ENCODE measurements at regions of chr11 and their contacts with region 1.

Region 1: DNA sequence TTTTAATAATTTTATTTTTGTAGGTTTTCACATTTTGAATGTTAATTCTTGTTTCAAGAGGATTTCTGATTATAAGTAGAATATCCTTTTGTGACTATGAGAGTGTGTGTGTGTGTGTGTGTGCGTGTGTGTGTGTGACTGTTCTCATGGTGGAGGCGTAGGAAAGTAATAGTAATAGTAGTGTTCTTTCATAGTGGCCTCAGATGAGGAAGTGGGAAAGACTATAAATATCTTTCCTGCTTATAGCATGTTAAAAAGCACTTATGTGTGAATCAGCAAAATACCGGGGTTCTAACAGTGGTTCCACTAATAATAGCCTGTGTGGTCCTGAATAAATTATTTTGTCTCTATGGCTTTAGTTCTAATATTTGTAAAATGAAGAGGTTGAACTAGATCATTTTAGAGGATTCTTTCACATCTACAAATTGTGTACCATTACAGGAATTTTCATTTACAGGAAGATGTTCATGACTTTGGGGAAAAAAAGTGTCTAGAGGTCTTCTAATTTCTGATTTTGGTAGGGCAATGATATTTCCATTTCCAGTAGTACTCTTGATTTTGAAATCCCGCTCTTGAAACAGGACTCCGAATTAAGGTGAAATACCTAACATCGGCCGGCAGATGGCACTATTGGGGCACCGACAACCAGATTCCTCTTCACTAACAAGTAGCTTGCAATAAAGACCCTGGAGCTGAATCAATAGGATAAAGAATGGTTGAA is 29.9 kb upstream of the OR10G7 start:
- DNase-seq: peak; percentile 72 to 82 (median 81)
- H3K4me3 ChIP-seq: peak overlapping the region in 1 of 3 experiments; percentile 62
- H3K4me3 Mint-ChIP-seq: peak overlapping the region; percentile 58 to 76
- H3K27ac ChIP-seq: peak overlapping the region in 1 of 2 donors; percentile 82
- H3K27ac Mint-ChIP-seq: peak overlapping the region; percentile 90 to 94 (median 92)
- H3K4me1 ChIP-seq: peaks cover 36 to 44% of the 10 kb centered on the region in 2 donors
- H3K4me1 Mint-ChIP-seq: peaks cover 43% of the 10 kb centered on the region
- H3K27me3 ChIP-seq: no peaks in the 10 kb centered on the region
- H3K27me3 Mint-ChIP-seq: peaks cover 0 to 2% (median 2%) of the 10 kb centered on the region in 3 donors
- CTCF ChIP-seq: peak; percentile 96

Region 2: DNA sequence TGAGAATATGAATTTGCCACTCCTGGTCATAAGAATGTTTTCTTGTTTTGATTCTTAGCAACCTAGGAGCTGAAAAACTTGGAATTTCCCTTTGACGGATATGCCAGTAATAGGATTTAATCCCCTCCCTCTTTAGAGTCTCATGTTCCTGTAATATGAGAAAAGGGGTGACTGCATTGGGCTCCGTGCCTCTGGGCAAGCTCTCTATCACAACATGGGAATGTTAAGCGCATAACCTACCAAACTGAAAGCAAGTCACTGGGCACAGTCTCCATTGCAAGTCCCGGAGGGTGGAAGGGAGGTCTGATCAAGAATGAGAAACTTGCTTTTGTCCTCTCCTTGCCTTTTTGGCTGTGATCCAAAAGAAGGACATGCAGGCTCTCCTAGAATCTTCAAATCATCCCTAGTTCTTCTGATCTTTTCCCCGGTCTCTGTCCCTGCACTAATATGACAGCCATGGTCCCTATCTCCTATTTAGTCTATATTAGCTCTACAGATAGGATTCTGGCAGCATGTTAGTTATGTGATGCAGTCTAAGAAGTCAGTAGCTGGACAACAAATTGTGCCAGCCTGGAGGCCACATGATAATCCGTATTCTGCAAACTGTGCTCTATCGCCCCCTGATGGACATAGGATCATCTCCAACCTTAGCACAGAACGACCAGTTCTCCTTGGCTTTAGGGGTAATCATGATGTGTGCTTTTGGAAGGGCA is 123.8 kb after region 1 on chr11:
- intact Hi-C with region 1: loop called (anchors 5 kb)
- DNase-seq: peak; percentile 63 to 76 (median 70)
- H3K4me3 ChIP-seq: no peak overlapping the region
- H3K4me3 Mint-ChIP-seq: no peak overlapping the region
- H3K27ac ChIP-seq: no peak overlapping the region
- H3K27ac Mint-ChIP-seq: peak overlapping the region in 1 of 7 donors; percentile 38
- H3K4me1 ChIP-seq: peaks cover 14 to 15% of the 10 kb centered on the region in 2 donors
- H3K4me1 Mint-ChIP-seq: peaks cover 18% of the 10 kb centered on the region
- H3K27me3 ChIP-seq: no peaks in the 10 kb centered on the region
- H3K27me3 Mint-ChIP-seq: peaks cover 0 to 3% (median 2%) of the 10 kb centered on the region in 3 donors
- CTCF ChIP-seq: peak; percentile 90

Region 3: DNA sequence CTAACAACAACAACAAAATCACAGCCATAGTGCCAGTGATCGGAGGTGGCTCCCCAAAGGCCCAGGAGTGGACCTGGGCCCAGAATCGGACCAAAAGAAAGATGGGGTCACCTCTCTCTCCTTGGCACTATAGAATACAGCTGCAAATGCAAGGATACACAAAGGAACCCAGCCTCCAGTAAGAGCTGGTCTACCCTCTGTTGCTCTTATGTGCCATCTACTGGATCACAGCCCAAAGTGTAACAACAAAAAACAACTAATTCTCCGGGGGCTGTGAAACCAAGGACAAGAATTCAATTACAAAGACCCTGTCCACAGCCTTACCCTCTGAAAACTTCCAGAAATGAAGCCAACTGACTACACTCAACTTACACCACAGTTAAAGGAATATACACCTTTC is 206.7 kb after region 1 on chr11:
- intact Hi-C with region 1: loop called in 1 of 2 experiments (anchors 10 kb)
- DNase-seq: no peak
- H3K4me3 ChIP-seq: no peak overlapping the region
- H3K4me3 Mint-ChIP-seq: no peak overlapping the region
- H3K27ac ChIP-seq: no peak overlapping the region
- H3K27ac Mint-ChIP-seq: peak overlapping the region in 1 of 7 donors; percentile 21
- H3K4me1 ChIP-seq: no peaks in the 10 kb centered on the region
- H3K4me1 Mint-ChIP-seq: peaks cover 7% of the 10 kb centered on the region
- H3K27me3 ChIP-seq: no peaks in the 10 kb centered on the region
- H3K27me3 Mint-ChIP-seq: peaks cover 0 to 2% (median 1%) of the 10 kb centered on the region in 3 donors
- CTCF ChIP-seq: no peak

Region 4: DNA sequence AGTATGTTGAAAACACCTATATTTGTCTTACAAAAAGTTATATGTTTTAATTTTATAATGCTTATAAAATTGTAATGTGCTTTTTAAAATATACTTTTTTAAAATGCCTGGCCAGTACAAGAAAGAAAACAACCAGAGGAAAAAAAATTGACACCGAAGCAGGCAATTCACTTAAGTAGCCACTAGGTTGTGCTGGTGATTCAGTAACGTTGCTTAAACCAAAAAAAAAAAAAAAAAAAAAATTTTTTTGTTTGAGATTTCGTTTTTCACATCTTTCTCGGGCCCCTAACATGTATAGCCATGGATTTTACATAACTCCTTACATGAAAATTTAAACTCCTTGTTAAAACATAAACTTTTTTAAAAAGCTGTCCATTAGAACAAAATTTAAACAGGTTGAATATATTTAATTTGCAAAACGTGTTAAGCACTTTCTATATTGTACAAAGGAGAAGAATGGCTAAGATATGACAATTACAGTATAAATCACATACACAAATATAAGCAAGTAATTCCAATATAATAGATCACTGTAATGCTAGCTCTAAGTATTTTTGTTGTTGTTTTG is 344.4 kb after region 1 on chr11:
- intact Hi-C with region 1: loop called in 1 of 2 experiments (anchors 10 kb)
- DNase-seq: peak in 1 of 3 donors; percentile 10
- H3K4me3 ChIP-seq: no peak overlapping the region
- H3K4me3 Mint-ChIP-seq: no peak overlapping the region
- H3K27ac ChIP-seq: no peak overlapping the region
- H3K27ac Mint-ChIP-seq: no peak overlapping the region
- H3K4me1 ChIP-seq: no peaks in the 10 kb centered on the region
- H3K4me1 Mint-ChIP-seq: no peaks in the 10 kb centered on the region
- H3K27me3 ChIP-seq: peaks cover 0 to 2% of the 10 kb centered on the region in 2 donors
- H3K27me3 Mint-ChIP-seq: peaks cover 0 to 12% (median 6%) of the 10 kb centered on the region in 3 donors
- CTCF ChIP-seq: peak; percentile 86

Region 5: GRCh38 chr11:124586238-124586860 is 515.3 kb after region 1 on chr11:
- intact Hi-C with region 1: loop called (anchors 10 kb)
- DNase-seq: peak; percentile 23 to 51 (median 41)
- H3K4me3 ChIP-seq: no peak overlapping the region
- H3K4me3 Mint-ChIP-seq: no peak overlapping the region
- H3K27ac ChIP-seq: no peak overlapping the region
- H3K27ac Mint-ChIP-seq: no peak overlapping the region
- H3K4me1 ChIP-seq: no peaks in the 10 kb centered on the region
- H3K4me1 Mint-ChIP-seq: no peaks in the 10 kb centered on the region
- H3K27me3 ChIP-seq: no peaks in the 10 kb centered on the region
- H3K27me3 Mint-ChIP-seq: peaks cover 7 to 9% (median 9%) of the 10 kb centered on the region in 3 donors
- CTCF ChIP-seq: peak; percentile 63

Measured in CD14-positive monocyte (primary cell).